Activated T-helper 1 cell treated with anti-CD3 and anti-CD28 coated beads, Interleukin-12 subunit alpha, Interleukin-12 subunit beta, Interleukin-2, Interleukin-4 antibody, amounts not matched to agents 30 ng/mL and 10 ng/mL and 1 ng/mL, durations not matched to agents 14 hours and 24 hours and 36 hours (primary cell): ENCODE measurements at regions of chr1 and their contacts with region 1.

Region 1: GRCh38 chr1:8348777-8349491 is 31.0 kb downstream of the SLC45A1 start:
- DNase-seq: peak; percentile 41
- H3K4me3 Mint-ChIP-seq: no peak overlapping the region
- H3K27ac Mint-ChIP-seq: no peak overlapping the region
- H3K4me1 Mint-ChIP-seq: peaks cover 4% of the 10 kb centered on the region
- H3K27me3 Mint-ChIP-seq: no peaks in the 10 kb centered on the region

Region 2: DNA sequence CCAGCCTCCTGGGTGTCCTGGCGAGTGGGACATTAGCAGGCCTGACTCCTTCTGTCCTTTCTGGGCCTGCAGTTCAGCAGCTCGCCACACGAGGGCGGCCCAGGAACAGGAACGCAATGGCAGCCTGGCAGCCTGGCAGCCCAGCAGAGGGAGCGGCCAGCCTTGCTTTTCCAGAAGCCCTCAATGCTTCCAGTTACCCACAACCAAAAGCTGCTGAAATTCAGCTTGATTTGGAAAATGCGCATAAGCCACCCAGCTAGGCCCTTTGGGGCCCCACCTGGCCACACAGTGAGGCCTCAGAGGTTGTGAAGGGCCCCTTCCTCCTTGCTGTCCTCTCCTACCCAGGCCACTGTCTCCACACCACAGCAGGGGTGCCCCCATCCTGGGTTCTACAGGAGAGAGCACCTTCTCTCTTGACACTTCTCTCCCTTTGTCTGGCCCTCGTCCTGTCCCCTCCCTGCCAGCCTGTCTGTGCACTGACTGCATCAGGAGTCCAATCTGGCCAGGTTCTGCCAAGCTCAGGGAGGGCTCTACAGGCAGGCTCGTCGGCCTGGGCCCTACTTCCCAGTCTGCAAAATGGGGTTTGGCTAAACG is 681.2 kb before region 1 on chr1:
- intact Hi-C with region 1: loop called (anchors 2 kb)
- DNase-seq: peak; percentile 64
- H3K4me3 Mint-ChIP-seq: no peak overlapping the region
- H3K27ac Mint-ChIP-seq: no peak overlapping the region
- H3K4me1 Mint-ChIP-seq: no peaks in the 10 kb centered on the region
- H3K27me3 Mint-ChIP-seq: peaks cover 2% of the 10 kb centered on the region

Region 3: GRCh38 chr1:7983086-7983778 is 365.7 kb before region 1 on chr1:
- intact Hi-C with region 1: loop called (anchors 1 kb)
- DNase-seq: no peak
- H3K4me3 Mint-ChIP-seq: no peak overlapping the region
- H3K27ac Mint-ChIP-seq: no peak overlapping the region
- H3K4me1 Mint-ChIP-seq: peaks cover 11% of the 10 kb centered on the region
- H3K27me3 Mint-ChIP-seq: no peaks in the 10 kb centered on the region

Region 4: DNA sequence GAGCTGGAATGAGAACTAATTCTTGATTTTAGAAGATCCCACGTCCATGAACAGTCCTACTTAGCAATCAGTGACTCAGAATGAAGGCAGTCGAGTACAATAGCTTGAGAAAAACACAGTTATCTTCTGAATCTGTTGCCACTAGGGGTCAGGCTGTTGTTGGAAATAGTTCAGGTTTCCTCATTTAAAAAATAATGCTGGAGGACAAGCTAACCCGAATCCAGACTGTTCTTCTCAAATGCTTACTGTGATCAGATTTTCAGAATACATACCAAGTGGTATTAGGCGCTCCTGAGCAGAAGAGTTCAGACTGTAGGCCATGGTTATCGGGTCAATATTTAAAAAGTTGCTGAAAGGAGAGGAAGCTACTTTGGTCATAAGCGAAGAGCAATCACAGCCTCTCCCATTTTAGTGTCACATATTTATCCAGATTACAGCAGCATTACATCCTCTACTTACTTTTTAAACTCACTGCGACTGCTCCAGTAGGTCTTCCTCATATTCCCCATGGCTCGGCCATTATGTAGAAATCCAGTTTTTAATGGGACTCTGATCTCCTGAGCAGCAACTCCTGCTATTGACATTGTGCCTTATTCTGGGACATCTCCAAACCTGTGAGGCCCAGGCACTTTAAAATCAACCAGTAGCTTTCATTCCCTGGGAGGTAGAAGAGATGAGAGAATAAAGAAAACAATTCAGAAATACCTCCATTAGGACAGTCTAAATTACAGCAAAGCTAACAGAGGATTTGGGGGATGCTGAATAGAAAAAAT is 333.7 kb before region 1 on chr1:
- intact Hi-C with region 1: loop called (anchors 1 kb)
- DNase-seq: peak; percentile 22
- H3K4me3 Mint-ChIP-seq: no peak overlapping the region
- H3K27ac Mint-ChIP-seq: no peak overlapping the region
- H3K4me1 Mint-ChIP-seq: peaks cover 5% of the 10 kb centered on the region
- H3K27me3 Mint-ChIP-seq: peaks cover 18% of the 10 kb centered on the region

Region 5: GRCh38 chr1:8026153-8026975 is 322.6 kb before region 1 on chr1 and contains the start of gene ERRFI1:
- intact Hi-C with region 1: loop called (anchors 1 kb)
- DNase-seq: peak; percentile 83
- H3K4me3 Mint-ChIP-seq: peak within 1 kb of the TSS; percentile 84
- H3K27ac Mint-ChIP-seq: peak within 1 kb of the TSS; percentile 32
- H3K4me1 Mint-ChIP-seq: peaks cover 12% of the 10 kb centered on the region
- H3K27me3 Mint-ChIP-seq: peaks cover 52% of the 10 kb centered on the region
- total RNA-seq, gene ERRFI1: 1.6 and 3.2 TPM in 2 replicates

Region 6: GRCh38 chr1:8137481-8138244 is 211.3 kb before region 1 on chr1:
- intact Hi-C with region 1: no loop called
- DNase-seq: no peak
- H3K4me3 Mint-ChIP-seq: no peak overlapping the region
- H3K27ac Mint-ChIP-seq: no peak overlapping the region
- H3K4me1 Mint-ChIP-seq: no peaks in the 10 kb centered on the region
- H3K27me3 Mint-ChIP-seq: peaks cover 20% of the 10 kb centered on the region